ENCODE measurements at regions of chr1 and their contacts with region 1.

Region 1: DNA sequence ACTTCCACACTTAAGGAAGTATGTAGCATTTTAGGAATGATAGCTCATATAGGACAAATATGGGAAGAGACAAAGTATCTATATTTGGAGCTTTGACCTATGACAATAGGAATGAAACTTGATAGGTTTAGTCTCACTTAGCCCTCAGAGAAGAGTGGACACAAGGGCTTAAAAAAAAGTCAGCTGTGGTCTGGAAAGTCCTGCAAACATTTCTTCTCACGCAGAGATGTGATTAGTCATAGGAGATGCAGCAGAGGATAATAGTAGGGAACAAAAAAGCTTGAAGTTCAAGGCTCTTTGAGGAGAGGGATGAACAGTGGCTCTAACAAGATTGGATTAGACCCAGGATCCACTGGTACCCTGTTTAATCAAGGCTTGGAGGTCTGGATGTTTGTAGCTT is 14.8 kb upstream of the RNF220 start:
- DNase-seq: peak; percentile 15
- H3K4me3 ChIP-seq: no peak overlapping the region
- H3K27ac ChIP-seq: no peak overlapping the region
- H3K27me3 ChIP-seq: peaks cover 32% of the 10 kb centered on the region
- CTCF ChIP-seq: no peak

Region 2: DNA sequence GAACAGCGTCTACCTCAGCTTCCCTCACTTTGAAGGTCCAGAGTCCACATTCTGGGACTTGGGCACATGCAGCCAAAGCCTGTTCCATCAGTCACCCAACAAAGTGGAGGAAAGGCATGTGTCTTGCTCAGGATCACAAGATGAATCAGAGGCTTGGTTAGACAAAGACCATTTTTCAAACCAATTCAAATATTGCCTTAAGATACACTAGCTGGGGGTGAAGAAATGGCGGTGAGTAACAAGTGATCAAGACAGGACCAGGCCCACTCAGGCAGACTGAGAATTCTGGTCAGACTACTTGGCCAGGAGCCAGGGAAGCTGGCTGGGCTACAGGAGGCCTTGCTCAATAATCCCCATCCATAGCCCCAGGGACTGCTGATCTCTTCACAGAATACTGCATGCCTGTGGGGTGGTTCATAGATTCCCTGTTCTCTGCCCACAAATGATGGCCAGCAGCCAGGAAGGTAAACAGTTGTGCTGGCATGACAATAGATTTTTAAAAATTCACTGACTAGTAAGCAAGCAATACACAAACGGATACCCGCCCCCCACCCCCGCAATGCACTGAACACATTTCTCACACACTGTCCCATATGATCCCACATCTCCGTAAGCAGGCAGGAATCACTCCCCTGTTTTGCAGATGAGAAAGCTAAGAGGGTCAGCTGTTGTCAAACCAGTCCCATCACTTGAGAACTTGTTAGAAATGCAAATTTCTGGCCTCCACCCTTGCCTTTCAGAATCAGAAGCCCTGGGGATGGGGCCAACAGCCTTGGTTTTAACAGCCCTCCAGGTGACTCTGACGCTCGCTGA is 62.4 kb before region 1 on chr1:
- CTCF ChIA-PET with region 1: no interaction called
- POLR2A ChIA-PET with region 1: interaction called, 13 read pairs
- DNase-seq: peak; percentile 98
- H3K4me3 ChIP-seq: no peak overlapping the region
- H3K27ac ChIP-seq: peak overlapping the region; percentile 92
- H3K27me3 ChIP-seq: no peaks in the 10 kb centered on the region
- CTCF ChIP-seq: no peak

Region 3: DNA sequence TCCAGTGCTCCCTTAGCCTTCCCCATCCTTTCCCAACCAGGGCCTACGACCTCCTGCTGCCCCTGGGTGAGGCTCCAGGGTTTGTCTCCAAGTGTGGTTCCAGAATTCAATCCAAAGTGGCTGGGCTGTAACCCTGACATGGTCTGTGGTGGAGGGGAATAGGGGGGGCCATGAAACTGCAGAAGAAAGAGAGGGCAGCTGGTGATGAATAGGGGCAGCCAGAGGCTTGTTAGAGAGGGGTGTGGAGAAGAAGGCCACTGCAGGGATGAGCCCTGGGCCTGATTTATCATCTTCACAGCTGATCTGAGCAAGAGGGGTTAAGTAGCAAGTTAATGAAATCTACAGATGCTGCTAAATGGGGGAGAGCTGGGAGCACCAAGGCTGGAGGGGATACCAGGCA is 22.3 kb before region 1 on chr1:
- CTCF ChIA-PET with region 1: no interaction called
- POLR2A ChIA-PET with region 1: no interaction called
- DNase-seq: no peak
- H3K4me3 ChIP-seq: no peak overlapping the region
- H3K27ac ChIP-seq: no peak overlapping the region
- H3K27me3 ChIP-seq: peaks cover 41% of the 10 kb centered on the region
- CTCF ChIP-seq: no peak

Region 4: DNA sequence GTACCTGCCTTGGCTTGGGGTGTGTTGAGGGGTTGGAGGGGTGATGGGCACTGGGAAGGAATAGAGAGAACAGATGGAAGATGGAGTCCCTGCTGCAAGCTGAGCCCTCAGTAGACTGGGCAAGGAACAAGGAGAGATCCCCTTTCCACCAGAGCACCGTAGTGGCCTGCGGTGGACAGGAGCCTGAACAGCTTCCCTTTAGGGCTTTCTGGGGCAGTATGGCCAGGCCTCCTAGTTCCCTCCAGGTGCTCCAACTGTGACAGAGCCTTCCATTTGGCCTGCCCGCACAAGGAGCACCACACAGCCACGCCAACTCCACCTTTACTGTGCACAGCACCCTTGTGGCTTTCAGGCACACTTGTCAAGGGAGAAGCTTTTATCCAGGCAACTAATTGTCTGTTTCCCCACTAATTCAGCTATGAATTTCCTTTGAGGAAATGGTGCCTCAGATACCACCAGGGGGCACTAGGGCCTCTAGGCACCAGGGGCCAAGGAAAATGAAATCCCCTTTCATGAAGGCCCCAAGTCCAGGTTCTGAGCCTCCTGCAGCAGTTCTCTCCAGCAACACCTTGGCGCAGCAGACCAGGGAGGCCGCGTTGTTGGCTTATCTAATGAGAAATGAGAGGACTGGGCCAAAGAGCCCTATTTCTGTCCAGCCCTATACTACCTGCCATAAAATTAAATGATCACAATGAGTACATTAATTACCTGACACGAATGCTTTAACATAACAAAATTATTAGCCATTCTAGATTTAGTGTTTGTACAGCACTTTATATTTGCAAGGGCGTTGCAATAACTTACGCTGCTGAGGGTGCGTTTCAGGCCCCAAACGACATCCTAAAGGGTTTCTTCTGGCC is 12.1 kb before region 1 on chr1:
- CTCF ChIA-PET with region 1: interaction called, 13 read pairs
- POLR2A ChIA-PET with region 1: no interaction called
- DNase-seq: peak; percentile 16
- H3K4me3 ChIP-seq: no peak overlapping the region
- H3K27ac ChIP-seq: no peak overlapping the region
- H3K27me3 ChIP-seq: peaks cover 30% of the 10 kb centered on the region
- CTCF ChIP-seq: peak; percentile 81

Region 5: GRCh38 chr1:44401256-44402228 is 11.3 kb after region 1 on chr1:
- CTCF ChIA-PET with region 1: no interaction called
- POLR2A ChIA-PET with region 1: no interaction called
- DNase-seq: no peak
- H3K4me3 ChIP-seq: no peak overlapping the region
- H3K27ac ChIP-seq: no peak overlapping the region
- H3K27me3 ChIP-seq: peaks cover 60% of the 10 kb centered on the region
- CTCF ChIP-seq: no peak

Region 6: DNA sequence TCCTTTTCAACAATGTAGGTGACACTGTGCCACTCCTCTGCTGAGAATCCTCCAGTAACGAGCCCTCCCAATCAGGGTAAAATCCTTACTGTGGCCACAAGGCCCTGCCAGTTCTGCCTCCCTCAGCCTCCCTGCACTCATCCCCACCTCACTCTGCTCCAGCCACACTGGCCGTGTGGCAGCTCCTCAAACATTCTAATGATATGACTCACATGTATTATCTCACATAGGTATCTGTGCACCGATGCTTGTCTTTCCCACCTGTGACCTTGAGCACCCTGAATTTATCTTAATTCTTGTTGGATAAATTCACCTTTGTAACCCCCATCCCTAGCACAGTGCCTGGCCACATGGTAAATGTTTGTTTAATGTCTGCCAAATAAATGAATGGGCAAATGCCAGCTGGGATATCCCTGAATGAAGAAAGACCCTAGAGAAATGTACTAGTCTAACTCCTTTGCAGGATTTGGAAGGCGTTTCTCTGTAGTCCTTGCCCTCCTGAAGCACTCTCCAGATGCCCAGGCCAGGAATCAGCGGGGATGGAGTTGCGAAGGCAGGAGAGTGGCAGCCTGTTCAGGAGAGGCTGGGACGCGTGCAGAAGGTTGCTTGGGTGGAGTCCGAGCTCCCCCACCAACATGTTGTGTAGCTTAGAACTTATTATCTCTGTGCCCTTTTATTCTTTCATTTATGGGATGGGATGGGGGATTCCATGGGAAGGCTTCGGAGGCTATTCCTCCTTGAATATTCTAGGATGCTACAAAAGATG is 178.0 kb after region 1 on chr1:
- CTCF ChIA-PET with region 1: no interaction called
- POLR2A ChIA-PET with region 1: no interaction called
- DNase-seq: no peak
- H3K4me3 ChIP-seq: no peak overlapping the region
- H3K27ac ChIP-seq: no peak overlapping the region
- H3K27me3 ChIP-seq: peaks cover 63% of the 10 kb centered on the region
- CTCF ChIP-seq: no peak